Left cardiac atrium (tissue), 4 donors: ENCODE measurements at regions of chr10 and their contacts with region 1.

Region 1: GRCh38 chr10:29725133-29725720 is 90.5 kb upstream of the SVIL start:
- DNase-seq: peak; percentile 44
- ATAC-seq: peak; percentile 91 to 92

Region 2: DNA sequence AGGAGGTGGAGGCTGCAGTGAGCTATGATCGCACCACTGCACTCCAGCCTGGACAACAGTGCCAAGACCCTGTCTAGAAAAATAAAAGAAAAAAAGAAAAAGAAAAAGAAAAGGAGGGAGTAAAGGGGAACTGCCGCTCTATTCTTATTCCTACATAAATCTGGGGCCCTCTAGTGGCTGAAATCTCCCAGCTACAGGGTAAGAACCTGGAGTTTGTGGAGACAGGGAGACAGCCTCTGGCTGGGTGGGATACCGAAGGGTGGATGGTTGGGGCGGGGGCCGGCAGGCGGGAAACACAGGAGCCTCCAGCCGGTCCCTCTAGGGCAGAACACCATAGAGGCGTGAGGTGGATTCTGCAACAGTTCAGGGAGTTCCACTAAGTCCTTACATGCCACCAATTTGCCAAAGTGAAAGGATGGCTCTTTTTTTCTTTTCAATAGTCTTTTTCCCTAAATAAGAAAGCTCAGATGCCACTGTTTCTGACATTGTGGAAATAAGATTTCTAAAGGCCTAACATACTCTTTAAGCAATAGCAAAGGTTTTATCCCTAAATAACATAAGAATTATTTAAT is 207.8 kb before region 1 on chr10:
- intact Hi-C with region 1: loop called in 1 of 2 experiments (anchors 10 kb)
- DNase-seq: no peak
- ATAC-seq: peak in 1 of 2 donors; percentile 12

Region 3: DNA sequence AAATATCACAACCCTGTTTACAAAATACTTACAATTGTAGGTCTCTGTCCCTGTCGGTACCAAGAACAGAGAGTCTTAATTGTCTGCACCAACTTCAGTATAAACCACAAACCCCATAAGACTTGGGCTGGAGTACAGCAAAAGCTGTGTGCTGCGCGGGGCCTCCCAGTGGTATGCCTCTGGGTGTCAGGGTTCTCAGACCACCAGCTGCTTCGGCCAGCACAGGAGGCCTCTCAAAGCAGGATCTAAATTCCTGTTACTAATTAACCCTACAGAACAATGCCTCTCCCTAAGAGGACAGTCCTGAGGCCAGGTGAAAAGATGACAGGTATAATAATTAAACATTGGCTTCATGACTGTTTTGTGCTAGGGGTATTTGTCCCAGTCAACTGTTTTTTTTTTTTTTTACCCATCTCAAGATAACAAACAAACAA is 89.5 kb before region 1 on chr10:
- intact Hi-C with region 1: loop called (anchors 5 to 10 kb)
- DNase-seq: no peak
- ATAC-seq: peak; percentile 43 to 48

Region 4: DNA sequence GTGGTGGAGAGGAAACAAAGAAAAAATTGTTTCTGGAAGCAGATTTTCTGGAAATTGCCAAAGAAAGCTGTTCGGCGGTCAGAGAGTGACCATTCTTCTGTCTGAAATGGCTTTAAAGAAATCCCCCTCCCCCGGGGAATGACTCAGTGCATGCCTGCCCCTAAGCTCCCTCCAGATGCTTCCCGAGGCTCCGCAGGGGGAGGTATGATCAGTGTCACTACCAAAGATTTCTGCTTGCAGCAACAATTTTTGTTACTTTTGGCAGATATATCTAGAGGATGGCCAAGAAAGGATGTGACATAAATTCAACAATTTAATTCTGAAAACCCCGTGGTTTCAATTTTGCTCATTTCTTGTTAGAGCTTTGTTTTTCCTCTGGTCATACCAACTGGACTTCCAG is 170.2 kb after region 1 on chr10:
- intact Hi-C with region 1: no loop called
- DNase-seq: peak; percentile 87
- ATAC-seq: peak; percentile 94 to 97